ENCODE measurements at regions of chr11 and their contacts with region 1.

Region 1: DNA sequence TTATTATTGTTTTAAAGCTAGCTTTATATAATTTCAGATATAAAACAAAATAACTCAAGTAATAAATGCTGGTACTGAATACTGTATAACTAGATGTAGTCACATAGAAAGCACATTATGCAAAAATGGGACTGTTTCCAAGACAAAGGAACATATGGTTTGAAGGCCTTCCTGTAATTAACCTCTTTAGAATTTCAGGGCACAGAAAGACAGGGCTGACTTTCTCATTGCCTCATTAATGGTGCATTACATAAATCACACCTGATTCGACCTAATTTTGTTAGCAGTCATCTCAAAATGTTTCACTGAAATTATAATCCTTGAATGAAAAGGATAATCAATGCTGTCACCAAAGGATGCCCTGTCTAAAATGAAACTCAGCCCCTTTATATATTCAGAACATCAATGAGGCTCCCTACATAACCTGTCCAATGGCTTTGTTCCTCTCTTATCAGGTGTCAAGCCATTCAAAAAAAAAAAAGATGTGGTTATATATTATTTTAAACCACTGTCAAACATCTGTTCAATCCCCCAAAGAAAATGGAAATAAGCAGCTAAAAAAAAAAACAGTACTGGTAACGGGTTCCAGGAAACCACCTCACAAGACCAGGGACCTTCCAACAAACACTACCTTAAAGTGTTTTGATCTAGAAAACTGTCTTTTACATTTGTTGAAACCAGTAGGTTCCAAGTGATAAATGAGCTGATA is 77.4 kb downstream of the FAM168A start:
- DNase-seq: no peak
- H3K4me3 Mint-ChIP-seq: no peak overlapping the region
- H3K27ac Mint-ChIP-seq: peak overlapping the region; percentile 79
- H3K4me1 Mint-ChIP-seq: peaks cover 26% of the 10 kb centered on the region
- H3K27me3 Mint-ChIP-seq: no peaks in the 10 kb centered on the region

Region 2: DNA sequence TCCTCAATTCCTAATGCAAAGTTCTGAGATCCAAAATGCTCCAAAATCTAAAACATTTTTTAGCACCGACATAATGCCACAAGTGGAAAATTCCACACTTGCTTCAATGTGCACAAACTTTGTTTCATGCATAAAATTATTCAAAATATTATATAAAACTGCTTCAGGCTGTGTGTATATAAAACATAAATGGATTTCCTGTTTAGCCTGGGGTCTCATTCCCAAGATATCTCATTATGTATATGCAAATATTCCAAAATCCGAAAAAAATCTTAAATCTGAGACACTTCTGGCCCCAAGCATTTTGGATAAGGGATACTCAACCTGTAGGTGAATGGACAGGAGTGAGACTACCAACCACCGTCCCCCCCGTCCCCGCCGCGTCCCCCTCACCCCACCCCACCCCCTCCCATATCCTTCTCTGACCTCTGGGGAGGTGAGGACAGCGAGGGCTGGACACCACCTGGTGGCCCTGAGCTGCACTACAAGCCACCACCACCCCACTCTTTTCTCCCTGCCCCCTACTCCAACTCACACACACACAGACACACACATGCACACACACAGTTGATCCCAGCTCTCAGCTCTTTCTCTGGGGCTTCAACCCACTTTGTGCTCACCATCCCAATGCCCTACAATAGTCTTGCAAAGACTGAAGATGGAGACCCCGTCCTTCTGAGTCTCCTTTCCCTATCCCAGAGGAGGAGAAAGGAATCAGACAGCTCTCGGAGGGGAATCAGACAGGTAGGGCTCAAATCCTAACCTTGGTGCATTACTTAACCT is 947.2 kb before region 1 on chr11:
- intact Hi-C with region 1: no loop called
- DNase-seq: no peak
- H3K4me3 Mint-ChIP-seq: no peak overlapping the region
- H3K27ac Mint-ChIP-seq: no peak overlapping the region
- H3K4me1 Mint-ChIP-seq: peaks cover 8% of the 10 kb centered on the region
- H3K27me3 Mint-ChIP-seq: peaks cover 10% of the 10 kb centered on the region

Region 3: GRCh38 chr11:73538381-73538872 is 17.9 kb after region 1 on chr11:
- intact Hi-C with region 1: loop called (anchors 1 kb)
- DNase-seq: no peak
- H3K4me3 Mint-ChIP-seq: no peak overlapping the region
- H3K27ac Mint-ChIP-seq: peak overlapping the region; percentile 74
- H3K4me1 Mint-ChIP-seq: peaks cover 21% of the 10 kb centered on the region
- H3K27me3 Mint-ChIP-seq: no peaks in the 10 kb centered on the region